Naive thymus-derived CD4-positive, alpha-beta T cell (primary cell): ENCODE measurements at regions of chr16 and their contacts with region 1.

Region 1: GRCh38 chr16:23952128-23952970 is 116.6 kb downstream of the PRKCB start:
- DNase-seq: peak in 3 of 9 donors; percentile 16 to 22 (median 17)
- ATAC-seq: peak; percentile 24
- H3K4me3 ChIP-seq: peak overlapping the region; percentile 14
- H3K4me3 Mint-ChIP-seq: peak overlapping the region; percentile 19 to 82 (median 72)
- H3K27ac ChIP-seq: peak overlapping the region; percentile 46
- H3K27ac Mint-ChIP-seq: peak overlapping the region; percentile 30 to 99 (median 91)
- H3K4me1 ChIP-seq: peaks cover 52 to 67% of the 10 kb centered on the region in 2 donors
- H3K4me1 Mint-ChIP-seq: peaks cover 68 to 95% (median 91%) of the 10 kb centered on the region in 7 donors
- H3K27me3 ChIP-seq: no peaks in the 10 kb centered on the region
- H3K27me3 Mint-ChIP-seq: no peaks in the 10 kb centered on the region

Region 2: DNA sequence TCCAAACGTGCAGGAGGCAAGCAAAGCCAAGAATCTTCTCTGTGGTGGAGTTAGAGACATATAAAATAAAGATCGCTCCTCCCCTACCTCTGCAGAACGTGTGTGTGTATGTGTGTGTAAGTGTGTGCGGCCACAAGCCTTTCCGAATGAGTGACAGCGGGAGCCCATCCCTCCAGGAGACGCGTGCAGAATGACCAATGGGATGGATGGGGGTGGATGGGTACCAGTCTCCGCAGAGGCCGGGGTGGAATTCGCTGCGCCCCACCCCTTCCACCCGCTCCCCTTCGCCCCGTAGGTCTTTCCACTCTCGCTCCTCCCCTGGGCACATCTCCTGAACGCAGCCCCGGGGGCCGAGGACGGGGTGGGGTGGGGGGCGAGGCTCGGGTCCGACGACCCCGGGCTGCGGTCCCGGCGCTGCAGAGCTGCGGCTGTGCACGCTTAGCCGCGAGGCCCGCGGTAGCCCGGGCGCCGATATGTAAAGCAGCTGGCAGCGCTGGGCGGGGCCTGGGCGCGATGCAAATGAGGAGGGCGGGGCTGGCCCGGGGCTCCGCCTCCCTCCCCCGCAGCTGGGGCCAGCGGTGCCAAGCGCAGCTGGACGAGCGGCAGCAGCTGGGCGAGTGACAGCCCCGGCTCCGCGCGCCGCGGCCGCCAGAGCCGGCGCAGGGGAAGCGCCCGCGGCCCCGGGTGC is 116.8 kb before region 1 on chr16 and contains the start of gene PRKCB:
- CTCF ChIA-PET with region 1: no interaction called
- POLR2A ChIA-PET with region 1: interaction called, 3 read pairs
- intact Hi-C with region 1: loop called in 1 of 2 experiments (anchors 1 kb)
- DNase-seq: peak; percentile 83 to 98 (median 90)
- ATAC-seq: peak; percentile 97
- H3K4me3 ChIP-seq: peak within 1 kb of the TSS; percentile 65
- H3K4me3 Mint-ChIP-seq: peak within 1 kb of the TSS; percentile 88 to 100 (median 98)
- H3K27ac ChIP-seq: peak within 1 kb of the TSS; percentile 65
- H3K27ac Mint-ChIP-seq: peak within 1 kb of the TSS; percentile 69 to 95 (median 85)
- H3K4me1 ChIP-seq: peaks cover 25 to 35% of the 10 kb centered on the region in 2 donors
- H3K4me1 Mint-ChIP-seq: peaks cover 52 to 65% (median 60%) of the 10 kb centered on the region in 7 donors
- H3K27me3 ChIP-seq: no peaks in the 10 kb centered on the region
- H3K27me3 Mint-ChIP-seq: peaks cover 0 to 3% (median 0%) of the 10 kb centered on the region in 5 donors
- total RNA-seq, gene PRKCB: 72.5 to 180 (median 73.1) TPM

Region 3: GRCh38 chr16:23877107-23878090 is 75.0 kb before region 1 on chr16:
- CTCF ChIA-PET with region 1: interaction called, 20 read pairs
- POLR2A ChIA-PET with region 1: interaction called, 3 read pairs
- intact Hi-C with region 1: loop called in 1 of 2 experiments (anchors 1 kb)
- DNase-seq: peak in 5 of 9 donors; percentile 31 to 43 (median 35)
- ATAC-seq: peak; percentile 43
- H3K4me3 ChIP-seq: no peak overlapping the region
- H3K4me3 Mint-ChIP-seq: peak overlapping the region in 1 of 10 donors; percentile 1
- H3K27ac ChIP-seq: no peak overlapping the region
- H3K27ac Mint-ChIP-seq: peak overlapping the region in 6 of 9 donors; percentile 10 to 93 (median 74)
- H3K4me1 ChIP-seq: peaks cover 26 to 27% of the 10 kb centered on the region in 2 donors
- H3K4me1 Mint-ChIP-seq: peaks cover 53 to 77% (median 71%) of the 10 kb centered on the region in 7 donors
- H3K27me3 ChIP-seq: no peaks in the 10 kb centered on the region
- H3K27me3 Mint-ChIP-seq: no peaks in the 10 kb centered on the region

Region 4: GRCh38 chr16:23966597-23967394 is 14.4 kb after region 1 on chr16:
- CTCF ChIA-PET with region 1: interaction called, 5 read pairs
- POLR2A ChIA-PET with region 1: interaction called, 5 read pairs
- intact Hi-C with region 1: loop called in 1 of 2 experiments (anchors 2 kb)
- DNase-seq: no peak
- ATAC-seq: peak; percentile 56
- H3K4me3 ChIP-seq: no peak overlapping the region
- H3K4me3 Mint-ChIP-seq: peak overlapping the region in 9 of 10 donors; percentile 7 to 70 (median 41)
- H3K27ac ChIP-seq: no peak overlapping the region
- H3K27ac Mint-ChIP-seq: peak overlapping the region in 8 of 9 donors; percentile 1 to 85 (median 41)
- H3K4me1 ChIP-seq: peaks cover 8 to 16% of the 10 kb centered on the region in 2 donors
- H3K4me1 Mint-ChIP-seq: peaks cover 25 to 55% (median 44%) of the 10 kb centered on the region in 7 donors
- H3K27me3 ChIP-seq: no peaks in the 10 kb centered on the region
- H3K27me3 Mint-ChIP-seq: no peaks in the 10 kb centered on the region